Heart right ventricle (tissue), 16 donors: ENCODE measurements at regions of chr1 and their contacts with region 1.

Region 1: GRCh38 chr1:20903437-20903836 is 116.3 kb upstream of the HP1BP3 start:
- DNase-seq: no peak
- ATAC-seq: no peak
- H3K4me3 ChIP-seq: no peak overlapping the region
- H3K27ac ChIP-seq: no peak overlapping the region
- H3K4me1 ChIP-seq: no peaks in the 10 kb centered on the region
- H3K27me3 ChIP-seq: no peaks in the 10 kb centered on the region
- CTCF ChIP-seq: no peak

Region 2: DNA sequence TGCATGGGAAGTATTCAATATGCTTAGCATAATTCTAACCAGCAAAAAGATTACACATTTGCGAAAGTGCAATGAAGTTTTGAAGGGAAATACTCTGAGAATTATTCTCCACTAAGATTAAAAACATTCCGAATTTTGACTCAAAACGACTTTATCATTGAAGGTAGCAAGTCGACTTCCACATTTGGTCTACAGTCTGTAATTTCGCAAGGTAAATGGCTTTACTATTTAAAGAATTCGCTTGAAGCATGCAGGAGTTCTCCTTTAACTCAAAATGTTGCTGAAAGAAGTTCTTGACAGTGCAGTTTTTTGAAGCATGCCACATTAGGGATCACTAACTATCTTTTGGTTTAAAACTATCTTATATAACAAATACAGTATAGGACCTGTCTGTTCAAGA is 44.7 kb after region 1 on chr1:
- intact Hi-C with region 1: loop called in 1 of 10 experiments (anchors 1 kb)
- DNase-seq: no peak
- ATAC-seq: no peak
- H3K4me3 ChIP-seq: no peak overlapping the region
- H3K27ac ChIP-seq: no peak overlapping the region
- H3K4me1 ChIP-seq: peaks cover 0 to 18% (median 0%) of the 10 kb centered on the region in 9 donors
- H3K27me3 ChIP-seq: no peaks in the 10 kb centered on the region
- CTCF ChIP-seq: no peak